Activated CD8-positive, alpha-beta memory T cell treated with anti-CD3 and anti-CD28 coated beads, Interleukin-2, amount 10 ng/mL, durations not matched to agents 7 days and 5 days (primary cell): ENCODE measurements at regions of chr10 and their contacts with region 1.

Region 1: DNA sequence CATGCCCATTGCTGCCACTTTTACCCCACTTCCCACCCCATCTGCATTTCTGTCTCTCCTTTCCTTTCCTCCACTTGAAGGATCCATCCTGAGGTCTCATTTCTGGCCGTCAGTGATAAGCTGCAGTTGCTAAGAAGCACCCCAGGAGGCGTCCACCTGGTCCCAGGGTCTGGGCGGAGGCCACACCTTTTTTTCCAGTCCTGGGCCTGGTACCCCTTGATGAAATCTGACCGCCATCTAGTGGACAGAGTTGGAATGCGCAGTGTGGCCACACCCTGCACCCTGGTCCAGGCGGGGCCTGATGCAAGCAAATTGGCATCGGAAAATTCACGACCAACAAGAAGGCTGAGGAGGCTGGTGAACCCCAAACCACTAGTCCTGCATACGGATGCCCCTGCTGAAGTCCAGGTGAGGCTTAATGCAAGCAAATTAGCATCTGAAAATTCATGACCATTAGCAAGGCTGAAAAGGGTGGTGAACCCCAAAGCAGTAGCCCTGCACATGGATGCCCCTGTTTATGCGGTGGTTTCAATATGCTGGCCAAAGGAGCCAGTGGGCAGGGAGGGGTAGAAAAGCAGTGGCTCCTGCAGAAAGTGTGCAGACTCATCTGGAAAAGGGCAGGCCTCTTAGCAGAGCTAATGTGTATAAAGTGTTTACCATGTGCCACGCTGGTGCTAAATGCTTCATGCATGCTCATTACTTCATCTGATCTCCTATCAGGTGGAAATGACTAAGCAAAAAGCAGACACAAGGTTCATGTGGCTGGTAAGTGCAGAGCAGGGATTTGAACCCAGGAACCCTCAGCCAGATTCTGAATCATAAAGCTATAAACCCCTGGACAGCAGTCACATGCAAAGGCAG is 43.2 kb downstream of the GPAM start:
- DNase-seq: peak; percentile 85
- ATAC-seq: peak; percentile 97
- H3K4me3 Mint-ChIP-seq: no peak overlapping the region
- H3K27ac Mint-ChIP-seq: no peak overlapping the region
- H3K4me1 Mint-ChIP-seq: peaks cover 6% of the 10 kb centered on the region
- H3K27me3 Mint-ChIP-seq: no peaks in the 10 kb centered on the region

Region 2: DNA sequence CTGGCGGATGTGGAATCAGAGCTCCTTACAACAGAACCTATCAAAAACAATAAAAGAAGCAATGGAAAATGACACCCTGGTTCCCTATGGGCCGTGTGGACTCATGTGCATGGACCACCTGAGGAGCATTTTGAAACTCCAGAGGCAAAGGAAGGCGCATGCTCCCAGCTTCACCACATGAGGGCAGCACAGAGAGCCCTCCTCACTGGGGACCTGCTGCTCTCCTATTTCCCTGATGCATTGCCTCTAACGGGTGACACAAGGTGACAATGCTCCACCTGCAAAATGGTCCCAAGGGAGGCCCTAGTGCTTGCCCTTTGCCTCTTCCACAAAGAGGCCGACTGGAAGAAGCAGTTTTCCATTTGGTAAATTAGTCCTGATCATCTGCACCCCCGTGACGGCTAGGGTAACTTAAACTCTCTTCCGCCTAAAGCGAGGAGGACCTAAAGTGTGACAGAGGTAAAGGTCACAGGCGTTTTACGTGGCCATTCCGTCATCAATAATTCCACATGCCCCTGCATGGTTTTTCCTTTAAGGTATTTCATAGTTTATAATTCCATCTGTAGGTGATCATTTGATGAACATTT is 24.4 kb before region 1 on chr10:
- CTCF ChIA-PET with region 1: interaction called, 51 read pairs
- DNase-seq: peak; percentile 60
- ATAC-seq: peak; percentile 68
- H3K4me3 Mint-ChIP-seq: no peak overlapping the region
- H3K27ac Mint-ChIP-seq: no peak overlapping the region
- H3K4me1 Mint-ChIP-seq: no peaks in the 10 kb centered on the region
- H3K27me3 Mint-ChIP-seq: peaks cover 7% of the 10 kb centered on the region

Region 3: GRCh38 chr10:112151524-112152039 is 11.2 kb after region 1 on chr10:
- CTCF ChIA-PET with region 1: interaction called, 41 read pairs
- DNase-seq: no peak
- ATAC-seq: no peak
- H3K4me3 Mint-ChIP-seq: no peak overlapping the region
- H3K27ac Mint-ChIP-seq: no peak overlapping the region
- H3K4me1 Mint-ChIP-seq: no peaks in the 10 kb centered on the region
- H3K27me3 Mint-ChIP-seq: no peaks in the 10 kb centered on the region

Region 4: DNA sequence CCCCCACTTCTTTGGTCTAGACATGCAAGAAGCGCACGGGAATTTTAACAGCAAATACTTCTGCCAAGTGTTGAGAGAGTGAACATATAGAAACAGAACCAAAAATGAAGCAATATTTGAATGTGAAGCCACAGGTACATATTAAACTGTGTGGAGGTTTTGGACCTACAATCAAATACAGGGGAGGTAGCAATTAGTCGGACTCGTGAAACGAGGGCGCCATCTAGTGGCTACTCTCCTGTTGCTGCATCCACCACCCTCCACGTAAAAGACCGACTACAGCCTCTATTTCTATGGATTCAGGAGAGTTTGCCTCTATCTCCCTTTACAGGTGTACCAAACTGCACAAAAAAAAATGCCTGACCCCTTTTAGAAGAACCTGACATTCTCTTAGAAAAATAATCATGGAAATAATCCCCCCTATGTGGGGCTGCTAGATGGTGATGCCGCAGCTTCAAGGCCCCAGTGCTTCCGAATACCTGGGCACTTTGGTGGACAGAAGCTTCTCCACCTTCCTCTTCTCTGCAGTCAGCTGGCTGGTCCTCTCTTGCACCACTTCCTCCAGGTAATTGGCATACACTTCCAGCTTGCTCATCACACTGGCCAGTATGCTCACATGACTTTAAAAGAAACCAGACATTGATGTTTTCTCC is 174.6 kb after region 1 on chr10:
- CTCF ChIA-PET with region 1: interaction called, 12 read pairs
- DNase-seq: peak; percentile 79
- ATAC-seq: peak; percentile 81
- H3K4me3 Mint-ChIP-seq: no peak overlapping the region
- H3K27ac Mint-ChIP-seq: no peak overlapping the region
- H3K4me1 Mint-ChIP-seq: no peaks in the 10 kb centered on the region
- H3K27me3 Mint-ChIP-seq: peaks cover 27% of the 10 kb centered on the region

Region 5: DNA sequence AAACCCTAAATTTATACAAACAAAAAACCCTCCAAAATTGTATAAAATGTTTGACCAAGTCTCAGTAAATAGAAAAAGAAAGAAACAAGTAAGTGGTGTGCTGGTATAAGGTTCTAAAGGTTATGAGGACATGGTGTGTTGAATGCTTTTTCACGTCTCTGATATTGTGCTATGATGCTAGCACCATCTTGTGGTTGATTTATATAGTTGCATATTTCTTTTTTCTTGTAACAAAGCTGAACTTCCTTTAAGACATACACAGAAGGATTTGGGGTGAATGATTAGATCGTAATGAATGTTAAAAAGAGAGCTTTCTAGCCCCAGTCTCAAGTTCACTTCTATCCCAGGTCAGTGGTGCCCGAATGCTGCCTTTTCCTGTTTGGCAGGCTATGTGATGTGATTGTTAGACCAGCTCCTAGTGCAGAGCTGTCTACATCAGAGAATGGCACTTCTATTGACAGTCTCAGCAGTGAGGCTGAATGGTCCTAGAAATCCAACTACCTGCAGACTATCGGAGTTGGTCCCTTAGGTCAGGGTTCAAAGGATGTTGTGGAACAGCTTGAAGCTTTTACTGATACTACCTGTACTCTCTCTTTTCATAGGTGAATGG is 331.6 kb after region 1 on chr10:
- CTCF ChIA-PET with region 1: interaction called, 14 read pairs
- DNase-seq: no peak
- ATAC-seq: peak; percentile 67
- H3K4me3 Mint-ChIP-seq: no peak overlapping the region
- H3K27ac Mint-ChIP-seq: no peak overlapping the region
- H3K4me1 Mint-ChIP-seq: peaks cover 4% of the 10 kb centered on the region
- H3K27me3 Mint-ChIP-seq: no peaks in the 10 kb centered on the region